ENCODE measurements at regions of chr6 and their contacts with region 1.

Region 1: GRCh38 chr6:63391203-63391970 is 71.6 kb upstream of the LGSN start:
- DNase-seq: peak; percentile 82 to 83
- H3K4me3 ChIP-seq: no peak overlapping the region
- H3K4me3 Mint-ChIP-seq: peak overlapping the region; percentile 67
- H3K27ac Mint-ChIP-seq: peak overlapping the region; percentile 73
- H3K4me1 ChIP-seq: peaks cover 44% of the 10 kb centered on the region
- H3K4me1 Mint-ChIP-seq: peaks cover 31% of the 10 kb centered on the region
- H3K27me3 ChIP-seq: no peaks in the 10 kb centered on the region
- H3K27me3 Mint-ChIP-seq: no peaks in the 10 kb centered on the region
- CTCF ChIP-seq: no peak

Region 2: GRCh38 chr6:63245909-63246308 is 145.5 kb before region 1 on chr6:
- CTCF ChIA-PET with region 1: no interaction called
- POLR2A ChIA-PET with region 1: no interaction called
- intact Hi-C with region 1: no loop called
- DNase-seq: peak in 1 of 2 experiments; percentile 17
- H3K4me3 ChIP-seq: no peak overlapping the region
- H3K4me3 Mint-ChIP-seq: no peak overlapping the region
- H3K27ac Mint-ChIP-seq: no peak overlapping the region
- H3K4me1 ChIP-seq: no peaks in the 10 kb centered on the region
- H3K4me1 Mint-ChIP-seq: no peaks in the 10 kb centered on the region
- H3K27me3 ChIP-seq: no peaks in the 10 kb centered on the region
- H3K27me3 Mint-ChIP-seq: peaks cover 3% of the 10 kb centered on the region
- CTCF ChIP-seq: peak in 1 of 2 experiments; percentile 40

Region 3: DNA sequence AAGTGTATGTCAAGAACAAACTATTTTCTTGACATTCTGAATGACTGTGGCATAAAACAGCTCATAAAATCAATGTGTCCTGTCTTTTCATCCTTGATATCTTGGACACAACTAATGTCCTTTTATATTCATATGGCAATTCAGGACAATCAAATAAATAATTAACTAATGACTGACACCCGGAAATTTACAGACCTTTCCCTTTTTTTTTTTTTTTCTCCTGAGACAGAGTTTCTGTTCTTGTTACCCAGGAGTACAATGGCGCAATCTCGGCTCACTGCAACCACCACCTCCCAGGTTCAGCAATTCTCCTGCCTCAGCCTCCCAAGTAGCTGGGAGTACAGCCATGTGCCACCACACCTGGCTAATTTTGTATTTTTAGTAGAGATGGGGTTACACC is 35.5 kb after region 1 on chr6:
- CTCF ChIA-PET with region 1: no interaction called
- POLR2A ChIA-PET with region 1: no interaction called
- intact Hi-C with region 1: loop called (anchors 1 kb)
- DNase-seq: no peak
- H3K4me3 ChIP-seq: no peak overlapping the region
- H3K4me3 Mint-ChIP-seq: no peak overlapping the region
- H3K27ac Mint-ChIP-seq: no peak overlapping the region
- H3K4me1 ChIP-seq: no peaks in the 10 kb centered on the region
- H3K4me1 Mint-ChIP-seq: peaks cover 3% of the 10 kb centered on the region
- H3K27me3 ChIP-seq: no peaks in the 10 kb centered on the region
- H3K27me3 Mint-ChIP-seq: no peaks in the 10 kb centered on the region
- CTCF ChIP-seq: no peak